PC-3 (cell line): ENCODE measurements at regions of chr12 and their contacts with region 1.

Region 1: DNA sequence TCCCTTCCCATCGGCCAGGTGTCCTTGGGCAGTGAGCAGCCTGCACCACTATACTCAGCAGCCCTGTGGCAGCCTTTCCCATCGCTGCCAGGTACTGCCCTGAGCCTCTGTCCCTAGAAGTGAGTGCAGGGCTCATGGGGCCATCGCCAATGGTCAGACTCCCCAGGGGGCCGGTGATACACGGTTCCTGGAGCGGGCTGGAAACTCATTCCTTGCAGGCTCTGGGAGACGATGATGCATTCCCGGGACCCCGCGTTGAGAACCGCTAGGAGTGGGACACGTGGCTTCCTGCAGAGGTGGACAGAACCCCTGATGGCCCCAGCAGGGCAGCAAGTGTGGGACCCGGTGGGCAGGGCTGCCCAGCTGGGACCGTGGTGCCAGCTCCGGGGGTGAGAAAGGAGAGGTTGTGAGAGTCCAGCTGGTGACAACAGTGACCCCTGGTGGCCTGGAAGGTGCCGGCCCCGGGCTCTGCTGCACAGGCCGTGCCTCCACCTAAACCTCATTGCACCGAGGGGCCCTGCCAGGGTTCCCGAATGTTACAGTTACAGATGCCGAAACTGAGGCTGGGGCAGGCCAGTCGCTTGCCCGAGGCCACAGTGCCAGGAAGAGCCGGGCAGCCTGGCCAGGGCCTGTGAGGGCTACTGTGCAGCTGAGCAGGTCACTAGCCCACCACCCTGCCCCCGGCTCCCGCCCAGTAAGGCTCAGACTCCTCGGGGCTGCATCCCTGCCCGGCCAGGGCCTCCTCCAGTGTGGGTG is 33.8 kb downstream of the FBRSL1 start:
- DNase-seq: peak; percentile 66
- ATAC-seq: peak; percentile 65
- H3K4me3 ChIP-seq: peak overlapping the region; percentile 19; the same call in 1 of the 2 replicates
- H3K27ac ChIP-seq: peak overlapping the region; percentile 33
- H3K4me1 ChIP-seq: peaks cover 21% of the 10 kb centered on the region
- H3K27me3 ChIP-seq: no peaks in the 10 kb centered on the region
- CTCF ChIP-seq: peak; percentile 92

Region 2: GRCh38 chr12:132470978-132471857 is 52.5 kb before region 1 on chr12:
- CTCF ChIA-PET with region 1: no interaction called
- POLR2A ChIA-PET with region 1: no interaction called
- intact Hi-C with region 1: no loop called
- DNase-seq: no peak
- ATAC-seq: no peak
- H3K4me3 ChIP-seq: no peak overlapping the region
- H3K27ac ChIP-seq: no peak overlapping the region
- H3K4me1 ChIP-seq: no peaks in the 10 kb centered on the region
- H3K27me3 ChIP-seq: no peaks in the 10 kb centered on the region
- CTCF ChIP-seq: no peak

Region 3: GRCh38 chr12:132490481-132491348 is 33.0 kb before region 1 on chr12:
- CTCF ChIA-PET with region 1: no interaction called
- POLR2A ChIA-PET with region 1: no interaction called
- intact Hi-C with region 1: loop called (anchors 1 kb)
- DNase-seq: no peak
- ATAC-seq: peak; percentile 4; the same call in 1 of the 2 replicates
- H3K4me3 ChIP-seq: peak overlapping the region; percentile 77
- H3K27ac ChIP-seq: no peak overlapping the region
- H3K4me1 ChIP-seq: peaks cover 41% of the 10 kb centered on the region
- H3K27me3 ChIP-seq: no peaks in the 10 kb centered on the region
- CTCF ChIP-seq: no peak

Region 4: GRCh38 chr12:132560614-132561426 is 37.1 kb after region 1 on chr12:
- CTCF ChIA-PET with region 1: no interaction called
- POLR2A ChIA-PET with region 1: no interaction called
- intact Hi-C with region 1: loop called (anchors 1 kb)
- DNase-seq: peak; percentile 80
- ATAC-seq: peak; percentile 53
- H3K4me3 ChIP-seq: peak overlapping the region; percentile 96
- H3K27ac ChIP-seq: peak overlapping the region; percentile 46
- H3K4me1 ChIP-seq: 0 out of 2 replicates have a peak, but pooled peaks cover 4% of the 10 kb centered on the region
- H3K27me3 ChIP-seq: no peaks in the 10 kb centered on the region
- CTCF ChIP-seq: peak; percentile 96

Region 5: DNA sequence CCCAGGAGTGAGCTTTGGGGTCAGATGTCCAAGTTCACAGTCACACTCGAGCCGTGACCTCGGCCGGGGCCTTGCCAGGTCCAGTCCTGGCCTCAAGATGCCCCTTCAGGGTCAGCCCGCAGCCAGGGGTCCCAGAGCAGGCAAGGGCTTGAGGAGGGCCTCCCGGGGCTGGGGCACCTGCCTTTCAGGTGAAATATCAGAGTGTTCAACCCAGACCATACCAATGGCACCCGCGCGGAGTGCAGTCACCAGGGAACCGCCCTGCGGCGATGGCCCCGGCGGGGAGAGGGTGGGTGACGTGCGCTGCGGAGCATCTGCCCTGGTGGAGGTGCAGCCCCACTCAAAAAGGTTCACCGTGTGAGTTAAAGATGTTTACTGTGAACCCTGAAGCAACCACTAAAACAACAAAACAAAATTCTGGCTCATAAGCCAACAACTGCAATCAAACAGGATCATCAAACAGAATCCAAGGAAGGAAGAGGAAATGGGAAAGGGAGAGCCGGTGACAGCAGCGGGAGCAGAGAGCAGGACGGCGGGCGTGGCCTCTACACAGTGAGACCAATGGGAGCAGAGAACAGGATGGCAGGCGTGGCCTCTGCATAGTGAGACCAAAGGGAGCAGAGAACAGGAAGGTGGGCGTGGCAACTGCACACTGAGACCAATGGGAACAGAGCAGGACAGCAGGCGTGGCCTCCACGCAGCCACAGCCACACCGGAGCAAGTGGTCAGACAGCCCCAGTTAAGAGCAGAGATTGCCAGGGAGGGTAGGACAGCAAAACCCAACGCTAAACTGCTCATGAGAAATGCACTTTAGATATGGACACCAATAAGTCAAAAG is 70.0 kb after region 1 on chr12:
- CTCF ChIA-PET with region 1: no interaction called
- POLR2A ChIA-PET with region 1: no interaction called
- intact Hi-C with region 1: loop called (anchors 10 kb)
- DNase-seq: peak; percentile 99
- ATAC-seq: peak; percentile 99
- H3K4me3 ChIP-seq: peak overlapping the region; percentile 60
- H3K27ac ChIP-seq: no peak overlapping the region
- H3K4me1 ChIP-seq: peaks cover 10% of the 10 kb centered on the region
- H3K27me3 ChIP-seq: no peaks in the 10 kb centered on the region
- CTCF ChIP-seq: no peak